Activated naive CD4-positive, alpha-beta T cell treated with anti-CD3 and anti-CD28 coated beads for 36 hours (primary cell): ENCODE measurements at regions of chr16 and their contacts with region 1.

Region 1: DNA sequence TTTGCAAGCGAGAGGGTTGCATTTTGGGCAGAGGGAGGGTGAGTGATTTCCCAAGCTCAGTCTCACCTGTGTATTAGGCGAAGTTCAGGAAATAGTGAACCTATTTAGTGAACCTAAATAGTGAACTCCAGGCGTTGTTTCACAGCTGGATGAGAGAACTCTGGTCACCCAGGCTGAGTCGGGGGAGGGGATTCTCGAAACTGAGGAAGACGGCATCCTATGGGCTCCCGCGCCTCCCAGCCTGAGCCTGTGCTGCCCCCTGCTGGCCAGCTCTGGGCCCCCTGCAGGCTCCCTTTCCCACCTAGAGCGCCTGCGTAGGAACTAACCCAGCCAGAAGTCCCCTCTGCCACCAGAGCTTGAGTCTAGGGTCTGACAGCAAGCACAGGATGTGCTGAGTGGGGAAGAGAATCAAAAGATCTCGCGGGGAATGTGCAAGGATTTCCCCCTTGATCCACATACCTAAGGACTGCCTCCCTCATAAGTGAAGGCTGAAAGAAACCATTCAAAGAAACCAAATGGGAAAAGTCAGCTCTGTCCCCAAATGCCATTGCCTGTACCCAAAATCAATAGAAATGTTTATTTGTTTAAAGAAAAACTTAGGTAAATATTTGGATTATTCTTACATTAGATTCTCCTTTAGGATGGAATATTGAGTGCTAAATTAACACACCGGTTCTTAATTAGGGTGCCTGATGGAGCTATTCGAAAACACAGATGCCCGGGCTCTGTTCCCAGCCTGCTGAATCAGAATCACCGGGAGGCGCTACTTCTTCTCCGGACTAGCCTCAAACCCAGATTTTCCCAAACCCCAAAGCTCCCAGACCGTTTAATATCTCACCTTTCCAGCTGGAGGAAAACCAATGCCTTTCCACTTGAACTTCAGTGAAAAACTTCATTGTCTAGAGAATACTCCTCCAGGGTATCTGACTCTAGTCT is 14.8 kb upstream of the MARVELD3 start:
- DNase-seq: peak; percentile 87
- H3K4me3 Mint-ChIP-seq: no peak overlapping the region
- H3K27ac Mint-ChIP-seq: no peak overlapping the region
- H3K4me1 Mint-ChIP-seq: peaks cover 14% of the 10 kb centered on the region
- H3K27me3 Mint-ChIP-seq: peaks cover 2% of the 10 kb centered on the region

Region 2: DNA sequence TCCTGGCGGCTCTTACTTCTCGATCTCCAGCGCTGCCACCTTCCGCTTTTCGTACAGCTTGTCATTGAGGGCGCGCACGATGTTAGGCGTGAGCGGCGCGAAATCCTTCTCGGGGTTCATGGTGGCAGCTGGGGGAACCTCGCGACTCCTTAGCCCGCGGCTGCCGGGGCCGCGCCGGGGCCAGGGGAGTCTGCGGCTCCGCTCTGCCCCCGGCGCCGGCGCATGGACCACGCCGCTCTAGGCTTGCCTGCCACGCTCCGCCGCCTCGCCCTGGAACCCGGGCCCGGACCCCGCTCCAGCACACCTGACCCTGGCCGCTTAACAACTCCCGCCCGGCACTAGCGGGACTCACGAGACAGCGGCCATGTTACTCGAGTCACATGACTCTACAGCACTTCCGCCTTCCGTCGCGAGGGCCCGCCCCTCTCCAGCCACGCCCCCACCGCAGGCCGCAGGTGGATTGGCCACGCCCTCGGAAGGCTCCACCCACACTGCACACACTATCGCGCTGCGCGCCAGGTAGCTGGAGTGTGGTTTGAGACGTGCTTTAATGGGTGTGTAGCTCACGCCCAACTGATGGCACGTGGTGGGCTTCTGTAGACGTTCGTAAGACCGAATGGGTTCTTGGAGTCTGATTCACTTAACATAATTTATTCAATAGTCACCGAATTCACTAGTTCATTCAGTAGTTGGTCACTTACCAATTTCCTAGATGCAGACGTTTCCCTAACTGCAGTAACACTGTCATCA is 810.2 kb before region 1 on chr16 and contains the start of gene VAC14:
- CTCF ChIA-PET with region 1: no interaction called
- intact Hi-C with region 1: loop called (anchors 10 kb)
- DNase-seq: peak; percentile 98
- H3K4me3 Mint-ChIP-seq: peak within 1 kb of the TSS; percentile 88
- H3K27ac Mint-ChIP-seq: peak within 1 kb of the TSS; percentile 32
- H3K4me1 Mint-ChIP-seq: peaks cover 19% of the 10 kb centered on the region
- H3K27me3 Mint-ChIP-seq: no peaks in the 10 kb centered on the region
- total RNA-seq, gene VAC14: 19.6 to 20.6 TPM

Region 3: GRCh38 chr16:71214746-71215381 is 396.3 kb before region 1 on chr16:
- CTCF ChIA-PET with region 1: no interaction called
- intact Hi-C with region 1: no loop called
- DNase-seq: no peak
- H3K4me3 Mint-ChIP-seq: no peak overlapping the region
- H3K27ac Mint-ChIP-seq: no peak overlapping the region
- H3K4me1 Mint-ChIP-seq: no peaks in the 10 kb centered on the region
- H3K27me3 Mint-ChIP-seq: peaks cover 15% of the 10 kb centered on the region

Region 4: DNA sequence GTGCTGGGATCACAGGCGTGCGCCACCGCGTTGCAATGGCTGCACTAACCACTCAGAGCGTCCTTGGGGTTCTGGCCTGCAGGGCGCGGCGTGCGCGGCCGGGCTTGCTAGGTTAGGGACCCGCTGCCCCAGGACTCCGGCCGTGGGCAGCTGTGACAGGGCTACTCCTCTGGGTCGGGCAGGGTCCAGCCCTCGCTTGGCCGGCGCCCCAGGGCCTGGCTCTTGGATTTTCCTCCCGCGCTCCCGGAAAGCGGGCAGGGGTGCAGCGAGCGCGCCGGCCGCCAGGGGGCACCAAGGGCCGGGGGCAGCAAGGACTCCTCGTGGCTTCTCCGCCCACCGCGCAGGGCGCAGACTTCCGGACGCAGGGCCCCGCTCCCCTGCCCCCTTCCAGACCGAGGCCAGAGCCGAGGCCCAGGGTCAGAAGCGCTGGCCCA is 169.8 kb before region 1 on chr16:
- CTCF ChIA-PET with region 1: interaction called, 21 read pairs
- intact Hi-C with region 1: no loop called
- DNase-seq: peak; percentile 38
- H3K4me3 Mint-ChIP-seq: no peak overlapping the region
- H3K27ac Mint-ChIP-seq: no peak overlapping the region
- H3K4me1 Mint-ChIP-seq: no peaks in the 10 kb centered on the region
- H3K27me3 Mint-ChIP-seq: peaks cover 29% of the 10 kb centered on the region

Region 5: GRCh38 chr16:71484006-71484893 is 127.0 kb before region 1 on chr16:
- CTCF ChIA-PET with region 1: interaction called, 5 read pairs
- intact Hi-C with region 1: loop called (anchors 5 kb)
- DNase-seq: peak; percentile 90
- H3K4me3 Mint-ChIP-seq: peak overlapping the region; percentile 74
- H3K27ac Mint-ChIP-seq: peak overlapping the region; percentile 79
- H3K4me1 Mint-ChIP-seq: peaks cover 13% of the 10 kb centered on the region
- H3K27me3 Mint-ChIP-seq: no peaks in the 10 kb centered on the region

Region 6: DNA sequence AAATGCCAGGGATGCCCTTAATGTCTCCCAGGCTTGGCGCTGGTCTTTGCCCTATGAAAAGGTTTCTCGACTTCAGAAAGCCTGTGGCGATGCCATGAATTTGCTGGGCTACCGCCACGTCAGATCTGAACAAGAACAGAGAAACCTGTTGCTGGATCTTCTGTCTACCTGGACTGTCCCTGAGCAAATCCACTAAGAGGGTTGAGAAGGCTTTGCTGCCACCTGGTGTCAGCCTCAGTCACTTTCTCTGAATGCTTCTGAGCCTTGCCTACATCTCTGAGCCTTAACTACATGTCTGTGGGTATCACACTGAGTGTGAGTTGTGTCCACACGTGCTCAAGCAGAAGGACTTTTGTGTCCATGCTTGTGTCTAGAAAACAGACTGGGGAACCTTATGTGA is 73.6 kb before region 1 on chr16:
- CTCF ChIA-PET with region 1: interaction called, 15 read pairs
- intact Hi-C with region 1: loop called (anchors 1 kb)
- DNase-seq: peak; percentile 65
- H3K4me3 Mint-ChIP-seq: no peak overlapping the region
- H3K27ac Mint-ChIP-seq: no peak overlapping the region
- H3K4me1 Mint-ChIP-seq: no peaks in the 10 kb centered on the region
- H3K27me3 Mint-ChIP-seq: no peaks in the 10 kb centered on the region

Region 7: GRCh38 chr16:71564155-71564967 is 46.8 kb before region 1 on chr16:
- CTCF ChIA-PET with region 1: interaction called, 75 read pairs
- intact Hi-C with region 1: loop called (anchors 1 kb)
- DNase-seq: no peak
- H3K4me3 Mint-ChIP-seq: peak overlapping the region; percentile 80
- H3K27ac Mint-ChIP-seq: peak overlapping the region; percentile 88
- H3K4me1 Mint-ChIP-seq: peaks cover 15% of the 10 kb centered on the region
- H3K27me3 Mint-ChIP-seq: no peaks in the 10 kb centered on the region

Region 8: DNA sequence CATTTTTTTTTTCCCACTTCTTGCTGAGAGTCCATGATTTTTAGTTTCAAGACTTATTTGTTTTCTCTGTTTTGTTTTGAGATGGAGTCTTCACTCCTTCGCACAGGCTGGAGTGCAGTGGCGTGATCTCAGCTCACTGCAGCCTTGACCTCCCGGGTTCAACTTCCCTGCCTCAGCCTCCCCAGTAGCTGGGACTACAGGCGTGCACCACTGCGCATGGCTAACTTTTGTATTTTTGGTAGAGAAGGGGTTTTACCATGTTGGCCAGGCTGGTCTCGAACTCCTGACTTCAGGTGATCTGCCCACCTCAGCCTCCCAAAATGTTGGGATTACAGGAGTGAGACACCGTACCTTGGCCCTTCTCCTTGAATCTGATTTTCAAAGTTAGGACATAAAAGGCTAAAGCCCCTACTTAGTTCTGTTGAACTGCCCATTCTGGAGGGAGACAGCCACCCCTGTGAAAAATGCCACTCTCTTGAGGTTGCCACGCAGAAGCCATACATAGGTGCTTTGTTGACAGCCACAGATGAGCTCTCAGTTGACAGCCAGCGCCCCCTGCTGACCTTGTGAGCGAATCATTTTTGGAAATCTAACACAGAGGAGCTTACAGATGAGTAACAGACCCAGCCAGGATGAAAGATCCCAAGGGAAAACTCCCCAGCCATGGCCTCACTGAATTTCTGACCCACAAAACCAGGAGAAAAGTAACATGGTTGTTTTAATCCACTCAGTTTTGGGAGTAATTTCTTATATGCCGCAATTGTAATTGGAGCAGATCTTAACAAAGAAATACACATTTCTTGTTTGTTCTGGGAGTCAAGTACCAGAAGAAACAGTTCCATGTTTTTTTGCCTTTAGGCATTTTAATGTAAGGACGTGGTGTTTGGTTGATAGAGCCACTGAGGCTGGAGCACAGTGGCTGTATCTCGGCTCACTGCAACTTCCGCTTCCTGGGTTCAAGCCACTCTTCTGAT is 350.1 kb after region 1 on chr16:
- CTCF ChIA-PET with region 1: interaction called, 7 read pairs
- intact Hi-C with region 1: loop called (anchors 1 kb)
- DNase-seq: peak; percentile 94
- H3K4me3 Mint-ChIP-seq: no peak overlapping the region
- H3K27ac Mint-ChIP-seq: no peak overlapping the region
- H3K4me1 Mint-ChIP-seq: peaks cover 2% of the 10 kb centered on the region
- H3K27me3 Mint-ChIP-seq: no peaks in the 10 kb centered on the region